Head of caudate nucleus (tissue), 42 donors: ENCODE measurements at regions of chr3 and their contacts with region 1.

Region 1: DNA sequence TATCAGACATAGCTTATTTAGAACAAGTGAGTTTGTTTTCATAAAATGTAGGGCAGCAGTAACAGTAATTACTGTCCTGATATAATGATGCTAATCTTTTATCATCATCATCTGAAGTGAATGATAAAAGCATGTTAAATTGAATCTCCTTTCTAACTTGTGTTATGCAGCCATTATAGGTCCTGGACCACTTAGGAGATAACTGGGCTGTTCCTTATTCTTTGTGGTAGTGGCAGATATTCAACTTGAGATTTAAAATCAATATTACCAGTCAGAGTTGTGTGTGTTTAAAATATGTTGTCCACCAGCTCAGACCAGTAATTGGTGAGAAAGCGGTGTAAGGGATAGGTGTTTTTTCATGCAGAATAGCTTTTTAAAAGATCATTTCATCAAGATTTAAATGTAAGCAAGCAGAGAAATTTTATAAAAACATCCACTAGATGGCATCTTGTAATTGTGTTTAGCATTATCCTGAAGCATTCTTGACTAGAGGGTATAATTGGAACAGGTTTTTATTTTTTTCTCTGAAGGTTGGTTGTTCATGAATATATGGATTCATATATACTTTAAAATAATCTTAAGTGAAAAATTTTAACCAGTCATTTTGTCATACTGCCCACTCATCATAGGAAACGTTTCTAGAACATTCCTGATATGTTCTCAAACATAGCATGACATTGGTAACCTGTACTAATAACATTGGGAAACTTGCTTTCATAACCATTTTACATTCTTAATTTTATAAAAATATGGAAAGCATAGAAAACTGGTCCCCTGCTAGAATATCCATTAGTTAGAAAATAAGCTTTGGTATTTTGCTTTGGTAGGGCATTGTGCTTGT is 153.9 kb downstream of the BBX start:
- DNase-seq: no peak

Region 2: GRCh38 chr3:106643684-106644161 is 1033.0 kb before region 1 on chr3:
- intact Hi-C with region 1: no loop called
- DNase-seq: no peak

Region 3: DNA sequence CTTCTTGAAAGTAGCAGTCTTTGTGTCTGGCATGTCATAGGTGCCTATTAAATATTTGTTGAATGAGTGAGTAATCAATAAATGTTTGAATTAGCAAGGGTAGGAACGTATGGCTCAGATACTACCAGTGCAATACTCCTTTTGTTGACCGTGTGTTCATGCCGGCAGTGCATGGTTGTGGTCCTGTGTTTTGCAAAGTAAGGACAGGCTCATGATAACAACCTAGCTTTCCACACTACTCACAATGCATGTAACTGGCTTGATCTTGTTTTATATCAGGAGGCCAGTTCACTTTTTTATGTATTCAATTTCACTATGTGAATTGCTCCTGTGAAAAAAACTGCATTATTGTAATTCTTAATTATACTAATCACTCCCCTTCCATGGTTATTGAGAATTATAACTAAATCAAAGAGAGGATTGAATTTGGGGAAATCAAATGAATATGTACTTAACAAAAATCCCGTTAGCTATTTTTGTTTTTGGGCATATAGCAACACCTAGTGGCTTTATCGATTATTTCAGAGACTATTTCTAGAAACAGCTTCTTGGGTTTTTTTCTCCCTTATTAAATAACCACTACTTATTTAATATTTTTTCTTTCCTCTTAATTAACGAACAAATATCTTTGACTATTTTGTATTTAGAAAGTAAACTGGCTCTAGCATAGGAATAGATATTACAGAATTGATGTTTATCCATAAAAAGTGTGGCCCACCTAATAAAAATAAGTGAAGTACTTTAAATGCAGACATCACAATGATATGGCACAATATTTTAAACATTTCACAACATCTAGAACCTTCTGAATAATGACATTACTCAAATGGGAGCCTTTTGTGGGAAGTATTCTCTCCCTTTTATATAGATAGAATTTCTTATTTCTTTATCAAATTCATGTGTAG is 64.6 kb after region 1 on chr3:
- intact Hi-C with region 1: loop called (anchors 5 kb)
- DNase-seq: no peak